CD8-positive, alpha-beta memory T cell (primary cell): ENCODE measurements at regions of chr6 and their contacts with region 1.

Region 1: DNA sequence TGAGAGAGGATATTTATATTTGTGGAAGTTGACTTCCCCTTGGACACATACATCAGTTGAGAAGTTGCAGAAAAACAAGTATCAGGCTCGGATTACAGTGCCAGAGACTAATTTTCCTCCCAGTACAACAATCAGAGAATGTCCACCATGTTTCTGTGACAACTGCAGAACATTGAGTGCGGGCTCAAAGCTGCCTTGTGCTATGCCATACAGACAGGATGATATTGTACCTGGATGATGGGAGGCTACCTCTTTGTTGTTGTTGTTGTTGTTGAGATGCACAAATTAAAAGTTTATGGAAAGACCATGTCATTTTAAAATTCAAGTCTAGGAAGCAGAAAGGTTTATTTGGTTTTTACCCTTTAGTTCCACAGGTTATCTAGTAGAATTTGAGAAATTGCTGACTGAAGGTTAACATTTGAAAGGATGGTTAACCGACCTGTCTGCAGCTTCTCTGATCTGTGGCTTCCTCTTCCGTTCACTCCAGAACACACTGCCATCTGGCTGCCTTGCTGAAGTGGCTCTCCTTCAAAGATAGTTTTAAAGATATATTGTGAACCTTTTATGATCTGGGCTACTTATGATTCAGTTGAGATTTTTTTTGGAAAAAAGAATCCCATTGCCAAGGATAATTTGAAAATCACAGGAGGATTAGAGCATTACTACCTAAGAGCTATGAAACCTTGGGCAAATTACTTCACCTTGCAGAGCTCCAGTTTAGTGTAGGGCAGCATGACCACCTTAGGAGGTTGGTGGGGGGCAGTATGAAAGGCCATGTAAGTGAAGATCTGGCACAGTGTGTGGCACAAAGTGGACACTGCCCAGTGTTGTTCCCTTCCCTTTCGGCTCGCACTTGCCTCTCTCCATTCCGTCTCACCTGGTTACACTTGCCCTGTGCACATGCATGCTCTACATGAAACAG is 15.9 kb downstream of the TMEM200A start:
- DNase-seq: peak; percentile 7 to 63 (median 34)
- H3K4me3 ChIP-seq: no peak overlapping the region
- H3K4me3 Mint-ChIP-seq: peak overlapping the region in 4 of 7 donors; percentile 1 to 7 (median 4)
- H3K27ac ChIP-seq: no peak overlapping the region
- H3K27ac Mint-ChIP-seq: peak overlapping the region in 4 of 8 donors; percentile 10 to 64 (median 26)
- H3K4me1 ChIP-seq: peaks cover 14% of the 10 kb centered on the region
- H3K4me1 Mint-ChIP-seq: peaks cover 16 to 31% (median 28%) of the 10 kb centered on the region in 3 donors
- H3K27me3 ChIP-seq: no peaks in the 10 kb centered on the region
- H3K27me3 Mint-ChIP-seq: peaks cover 0 to 2% of the 10 kb centered on the region in 2 donors

Region 2: DNA sequence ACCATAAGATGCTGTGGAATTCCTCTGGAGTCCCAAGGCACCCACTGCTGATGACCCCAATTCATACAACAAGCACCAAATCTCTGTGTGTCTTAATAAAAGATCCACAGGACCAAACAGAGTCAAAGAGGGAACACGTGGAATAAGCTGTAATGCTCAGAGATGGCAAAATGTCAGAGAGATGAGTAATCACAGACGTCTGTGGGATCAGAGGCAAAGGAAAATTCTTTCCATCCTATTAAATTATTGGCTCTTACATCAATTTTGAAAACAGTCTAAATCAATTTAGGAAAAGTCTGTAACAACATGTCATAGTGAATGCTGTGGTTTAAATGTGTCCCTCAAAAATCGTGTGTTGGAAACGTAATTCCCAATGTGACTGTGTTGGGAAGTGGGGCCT is 141.5 kb before region 1 on chr6:
- CTCF ChIA-PET with region 1: no interaction called
- POLR2A ChIA-PET with region 1: no interaction called
- DNase-seq: no peak
- H3K4me3 ChIP-seq: no peak overlapping the region
- H3K4me3 Mint-ChIP-seq: no peak overlapping the region
- H3K27ac ChIP-seq: no peak overlapping the region
- H3K27ac Mint-ChIP-seq: no peak overlapping the region
- H3K4me1 ChIP-seq: no peaks in the 10 kb centered on the region
- H3K4me1 Mint-ChIP-seq: no peaks in the 10 kb centered on the region
- H3K27me3 ChIP-seq: no peaks in the 10 kb centered on the region
- H3K27me3 Mint-ChIP-seq: no peaks in the 10 kb centered on the region

Region 3: GRCh38 chr6:130365166-130366106 is 16.3 kb before region 1 on chr6 and contains the start of gene TMEM200A:
- CTCF ChIA-PET with region 1: interaction called, 23 read pairs
- POLR2A ChIA-PET with region 1: no interaction called
- DNase-seq: peak; percentile 18 to 59 (median 30)
- H3K4me3 ChIP-seq: peak within 1 kb of the TSS; percentile 58
- H3K4me3 Mint-ChIP-seq: peak within 1 kb of the TSS; percentile 78 to 91 (median 84)
- H3K27ac ChIP-seq: peak within 1 kb of the TSS; percentile 1
- H3K27ac Mint-ChIP-seq: peak within 1 kb of the TSS in 6 of 8 donors; percentile 3 to 66 (median 38)
- H3K4me1 ChIP-seq: peaks cover 13% of the 10 kb centered on the region
- H3K4me1 Mint-ChIP-seq: peaks cover 29 to 38% (median 37%) of the 10 kb centered on the region in 3 donors
- H3K27me3 ChIP-seq: peaks cover 5% of the 10 kb centered on the region
- H3K27me3 Mint-ChIP-seq: peaks cover 0 to 5% of the 10 kb centered on the region in 2 donors
- total RNA-seq, gene TMEM200A: 1.4 to 1.7 TPM